Posterior vena cava (tissue), 2 donors: ENCODE measurements at regions of chr6 and their contacts with region 1.

Region 1: DNA sequence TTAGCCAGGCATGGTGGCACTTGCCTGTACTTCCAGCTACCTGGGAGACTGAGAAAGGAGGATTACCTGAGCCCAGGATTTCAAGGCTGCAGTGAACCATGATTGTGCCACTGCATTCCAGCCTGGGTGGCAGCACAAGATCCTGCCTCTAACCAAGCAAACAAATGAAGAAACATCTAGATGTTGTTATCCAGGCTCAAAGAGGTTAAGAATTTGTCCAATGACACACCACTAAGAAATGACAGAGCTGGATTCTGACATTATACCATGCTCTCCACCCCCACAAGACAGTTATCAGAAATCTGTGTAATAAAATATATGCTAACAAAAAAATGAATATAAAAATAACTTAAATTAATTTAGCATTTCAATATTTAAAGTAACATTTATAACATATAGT is 925.5 kb upstream of the SLC35B3 start:
- DNase-seq: no peak

Region 2: DNA sequence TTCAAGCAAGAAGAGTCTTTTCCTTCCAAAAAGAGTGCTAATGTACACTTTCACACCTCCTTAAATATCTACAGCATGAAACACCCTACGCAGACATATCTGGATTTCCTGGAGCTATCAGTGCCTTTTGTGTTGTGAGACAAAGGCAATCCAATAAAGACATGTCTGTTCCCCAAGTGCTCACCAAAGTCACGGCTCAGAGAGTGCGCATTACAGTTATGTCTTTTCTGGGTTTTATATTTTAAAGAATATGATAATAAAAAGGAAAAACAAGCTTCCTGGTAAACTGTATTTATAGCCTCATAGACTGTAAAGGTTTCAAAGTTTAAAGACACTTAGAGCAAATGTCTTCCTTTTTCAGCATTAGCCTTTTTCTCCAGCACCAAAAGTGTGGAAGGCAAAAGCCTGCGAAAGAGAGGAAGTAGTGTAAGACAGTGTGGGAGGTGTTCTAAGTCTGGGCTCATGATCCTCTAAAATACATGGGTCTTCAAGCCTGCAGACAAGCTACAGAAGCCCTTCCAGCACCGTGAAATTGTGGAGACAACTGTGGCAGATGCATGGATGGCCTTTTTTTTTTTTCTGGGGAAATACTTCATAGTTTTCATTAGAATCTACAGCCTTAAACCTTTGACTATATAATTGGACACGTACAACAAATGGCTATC is 790.5 kb before region 1 on chr6:
- intact Hi-C with region 1: loop called in 1 of 2 experiments (anchors 5 kb)
- DNase-seq: no peak